ENCODE measurements at regions of chr16 and their contacts with region 1.

Region 1: DNA sequence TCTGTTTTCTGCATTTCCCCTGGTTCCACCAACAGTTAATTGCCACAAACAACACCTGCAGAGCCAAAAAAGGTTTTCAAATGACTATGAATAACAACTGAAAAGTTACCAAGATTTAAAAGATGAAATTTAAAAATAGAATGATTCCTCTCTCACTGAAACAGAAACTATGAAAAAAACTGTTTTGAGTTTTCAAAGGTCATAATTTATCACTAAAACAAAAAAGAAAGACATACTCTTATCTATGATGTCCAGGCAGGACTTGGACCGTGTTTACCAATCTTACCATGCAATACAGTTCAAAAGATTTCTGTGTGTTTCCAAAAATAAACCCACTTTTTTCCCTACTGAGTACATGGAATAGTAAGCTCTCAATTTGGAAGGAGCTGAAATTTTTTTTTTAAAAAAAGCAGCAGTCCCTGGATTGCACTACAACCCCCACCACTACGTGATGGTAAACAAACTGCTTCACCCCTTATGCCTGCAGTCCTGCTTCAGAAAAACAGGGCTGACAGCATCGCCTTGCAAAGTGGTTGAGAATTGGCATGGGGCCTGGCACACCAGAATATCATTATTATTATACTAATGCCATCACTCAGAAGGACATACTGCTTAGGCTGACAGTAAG is 8.5 kb downstream of the TXNDC11 start:
- DNase-seq: peak in 3 of 5 donors; percentile 20 to 44 (median 24)
- ATAC-seq: peak; percentile 61 to 75 (median 72)
- H3K4me3 ChIP-seq: no peak overlapping the region
- H3K27ac ChIP-seq: peak overlapping the region in 10 of 12 donors; percentile 1 to 68 (median 34)
- H3K4me1 ChIP-seq: peaks cover 0 to 71% (median 40%) of the 10 kb centered on the region in 12 donors
- H3K27me3 ChIP-seq: no peaks in the 10 kb centered on the region
- CTCF ChIP-seq: no peak
- POLR2A ChIP-seq: no peak

Region 2: DNA sequence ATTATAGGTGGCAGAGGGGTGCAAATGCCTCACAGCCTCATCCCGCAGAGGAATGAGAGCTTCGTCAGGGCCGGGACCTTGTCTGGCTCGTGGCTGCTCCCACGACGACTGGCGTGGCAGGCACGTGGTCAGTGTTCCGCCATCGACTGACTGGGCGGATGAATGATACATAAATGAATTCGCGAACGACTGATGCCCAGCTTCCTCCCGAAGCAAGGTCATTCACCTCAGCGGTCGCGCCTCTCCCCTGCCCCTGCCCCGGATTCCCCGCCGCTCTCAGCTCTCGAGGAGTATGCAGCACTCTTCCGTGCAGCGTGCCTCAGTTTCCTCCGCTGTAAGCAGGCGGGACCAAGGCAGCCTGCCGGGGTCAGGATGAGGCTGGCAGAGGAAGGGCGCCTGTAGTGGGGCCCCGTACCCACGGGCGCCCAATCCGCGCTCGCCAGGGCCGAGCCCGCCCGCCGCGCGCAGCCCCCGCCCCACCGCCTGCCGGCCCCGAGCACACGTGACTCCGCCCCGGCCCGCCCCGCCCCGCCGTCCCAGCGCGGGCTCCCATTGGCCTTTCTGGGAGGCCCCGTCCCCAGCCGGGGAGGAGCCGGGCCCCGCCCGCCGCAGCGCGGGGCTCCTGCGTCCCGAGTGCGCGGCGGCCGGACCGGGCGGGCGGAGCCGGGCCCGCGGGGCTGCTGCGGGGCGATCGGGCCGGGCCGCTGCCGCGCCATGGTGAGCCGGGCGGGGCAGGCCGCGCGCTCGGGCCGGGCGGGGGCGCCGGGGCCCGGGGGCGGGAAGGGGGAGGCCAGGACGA is 66.1 kb before region 1 on chr16 and contains the start of gene SNN:
- intact Hi-C with region 1: loop called in 1 of 10 experiments (anchors 2 kb)
- DNase-seq: peak; percentile 90 to 96 (median 92)
- ATAC-seq: peak; percentile 84 to 93 (median 90)
- H3K4me3 ChIP-seq: peak within 1 kb of the TSS; percentile 70 to 100 (median 90)
- H3K27ac ChIP-seq: peak within 1 kb of the TSS; percentile 47 to 90 (median 84)
- H3K4me1 ChIP-seq: peaks cover 3 to 64% (median 47%) of the 10 kb centered on the region in 12 donors
- H3K27me3 ChIP-seq: no peaks in the 10 kb centered on the region
- CTCF ChIP-seq: no peak
- POLR2A ChIP-seq: no peak
- total RNA-seq, gene SNN: 17.0 to 60.0 (median 36.4) TPM